Activated T-helper 1 cell treated with anti-CD3 and anti-CD28 coated beads, Interleukin-12 subunit alpha, Interleukin-12 subunit beta, Interleukin-2, Interleukin-4 antibody, amounts not matched to agents 30 ng/mL and 10 ng/mL and 1 ng/mL, durations not matched to agents 14 hours and 24 hours and 36 hours (primary cell): ENCODE measurements at regions of chr20 and their contacts with region 1.

Region 1: DNA sequence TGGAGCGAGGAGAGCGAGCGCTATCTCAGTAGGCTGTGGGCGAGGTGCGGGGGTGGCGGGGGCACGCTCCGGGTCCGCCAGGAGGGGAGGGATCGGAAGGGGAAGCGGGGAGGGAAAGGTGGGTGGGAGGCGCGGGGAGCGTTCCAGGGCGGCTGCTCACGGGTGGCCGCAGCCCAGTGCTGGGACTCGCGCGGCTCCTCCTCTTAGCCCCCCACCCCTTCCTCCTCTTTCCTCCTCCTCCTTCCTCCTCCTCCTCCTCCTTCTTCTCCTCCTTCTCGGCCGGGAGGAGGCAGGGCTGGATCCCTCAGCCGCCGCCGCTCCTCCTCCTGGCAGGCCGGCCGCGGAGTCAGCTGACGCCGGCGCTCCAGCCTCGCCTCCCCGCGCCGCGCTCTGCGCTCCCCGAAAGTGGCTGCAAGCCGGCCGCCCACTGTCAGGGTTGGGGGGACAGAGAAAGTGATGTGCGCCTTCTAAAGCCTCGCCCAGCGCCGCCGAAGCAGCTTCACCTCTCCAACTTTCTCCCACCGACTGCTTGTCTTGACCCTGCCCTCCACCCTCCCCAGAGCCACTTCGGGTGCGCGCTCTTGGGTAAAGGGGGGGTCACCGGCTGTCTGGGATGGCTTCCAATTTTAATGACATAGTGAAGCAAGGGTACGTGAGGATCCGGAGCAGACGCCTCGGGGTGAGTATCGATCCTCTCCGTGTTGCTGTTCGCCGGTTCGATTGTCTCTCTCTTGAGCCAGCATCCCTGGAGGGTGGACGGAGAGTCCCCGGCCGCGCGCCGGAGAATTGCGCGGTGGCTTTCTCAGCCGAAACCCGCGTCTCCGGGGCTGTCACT is at the start of gene DOK5:
- DNase-seq: no peak
- H3K4me3 Mint-ChIP-seq: peak within 1 kb of the TSS; percentile 83
- H3K27ac Mint-ChIP-seq: peak within 1 kb of the TSS; percentile 46
- H3K4me1 Mint-ChIP-seq: peaks cover 19% of the 10 kb centered on the region
- H3K27me3 Mint-ChIP-seq: peaks cover 23% of the 10 kb centered on the region
- total RNA-seq, gene DOK5: 25.2 and 27.7 TPM in 2 replicates

Region 2: GRCh38 chr20:52577696-52578095 is 1897.9 kb before region 1 on chr20:
- intact Hi-C with region 1: no loop called
- DNase-seq: no peak
- H3K4me3 Mint-ChIP-seq: no peak overlapping the region
- H3K27ac Mint-ChIP-seq: no peak overlapping the region
- H3K4me1 Mint-ChIP-seq: no peaks in the 10 kb centered on the region
- H3K27me3 Mint-ChIP-seq: no peaks in the 10 kb centered on the region

Region 3: DNA sequence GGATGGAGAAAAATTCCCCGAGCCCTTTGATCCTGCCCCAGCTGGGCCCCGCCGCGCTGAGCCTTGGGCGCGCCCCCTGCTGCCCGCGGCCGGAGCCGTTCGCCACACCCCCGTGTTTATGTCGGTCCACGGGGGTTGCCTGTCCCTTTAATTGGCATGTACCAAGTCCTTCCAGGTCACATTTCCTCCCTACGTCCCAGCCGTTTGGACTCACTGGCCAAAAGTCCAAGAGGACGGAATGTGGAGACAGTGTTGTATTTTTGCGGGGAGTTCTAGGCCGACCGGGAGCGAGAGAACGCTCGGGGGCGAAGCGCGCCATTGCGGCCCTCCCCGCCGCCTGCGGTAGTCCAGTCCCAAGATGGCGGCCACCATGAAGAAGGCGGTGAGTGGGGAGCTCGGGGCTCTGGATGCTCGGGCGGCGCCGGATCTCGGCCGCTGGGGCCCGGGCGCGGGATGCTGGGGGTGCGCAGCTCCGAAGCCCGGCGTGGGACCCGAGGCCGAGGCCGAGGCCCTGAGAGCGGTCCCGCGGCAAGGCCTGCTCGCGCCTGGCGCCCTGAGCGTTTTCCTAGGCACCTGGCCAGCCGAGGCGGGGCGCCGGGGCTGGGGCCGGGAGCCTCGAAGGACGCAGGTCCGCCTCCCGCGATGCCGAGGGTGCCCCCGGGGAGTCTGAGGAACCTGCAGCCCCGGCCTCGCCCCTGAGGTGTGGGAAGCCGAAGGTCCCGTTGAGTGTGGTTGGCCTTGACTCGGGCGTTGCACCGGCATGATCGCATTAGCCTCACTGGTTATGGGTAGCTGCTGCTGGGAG is 267.6 kb before region 1 on chr20 and contains the start of gene PFDN4:
- intact Hi-C with region 1: loop called (anchors 5 kb)
- DNase-seq: peak; percentile 79
- H3K4me3 Mint-ChIP-seq: peak within 1 kb of the TSS; percentile 96
- H3K27ac Mint-ChIP-seq: peak within 1 kb of the TSS; percentile 99
- H3K4me1 Mint-ChIP-seq: peaks cover 31% of the 10 kb centered on the region
- H3K27me3 Mint-ChIP-seq: no peaks in the 10 kb centered on the region
- total RNA-seq, gene PFDN4: 72.6 and 75.8 TPM in 2 replicates

Region 4: DNA sequence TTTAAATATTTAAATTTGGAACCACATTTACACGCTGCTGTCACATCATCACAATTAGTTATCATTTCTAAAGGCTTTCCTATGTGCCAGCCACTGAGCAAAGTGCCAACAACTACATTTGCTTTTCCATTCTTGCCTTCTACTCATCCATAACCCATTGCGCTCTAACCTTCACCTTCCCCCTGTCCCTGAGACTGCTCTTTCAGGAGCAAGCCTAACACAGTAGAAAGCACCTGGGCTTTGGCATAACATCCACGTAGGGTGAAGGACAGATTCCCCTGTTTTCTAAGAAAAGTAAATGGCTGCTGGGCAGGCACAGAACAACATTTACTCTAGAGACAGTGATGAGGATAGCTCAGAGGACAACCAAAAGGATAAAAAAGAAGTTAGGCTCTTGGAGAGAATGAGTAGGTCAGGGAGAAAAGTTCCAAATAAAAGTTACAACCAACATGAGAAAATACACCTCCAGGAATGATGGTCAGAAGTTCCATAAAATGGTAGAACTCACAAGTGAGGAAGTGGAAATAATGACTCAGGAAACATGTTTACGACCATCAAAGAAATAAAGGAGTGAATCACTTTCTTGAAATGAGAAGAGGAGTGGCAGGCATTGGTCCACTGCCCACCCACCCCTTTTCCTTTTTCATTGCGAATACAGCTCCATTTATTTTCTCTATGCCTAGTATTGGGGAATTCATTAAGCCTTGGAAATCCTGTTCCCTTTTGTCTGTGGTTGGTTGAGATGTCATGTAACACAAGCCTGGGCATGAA is 190.4 kb before region 1 on chr20:
- intact Hi-C with region 1: loop called (anchors 10 kb)
- DNase-seq: no peak
- H3K4me3 Mint-ChIP-seq: peak overlapping the region; percentile 79
- H3K27ac Mint-ChIP-seq: peak overlapping the region; percentile 96
- H3K4me1 Mint-ChIP-seq: peaks cover 28% of the 10 kb centered on the region
- H3K27me3 Mint-ChIP-seq: no peaks in the 10 kb centered on the region

Region 5: GRCh38 chr20:54350415-54350814 is 125.1 kb before region 1 on chr20:
- intact Hi-C with region 1: loop called (anchors 2 kb)
- DNase-seq: no peak
- H3K4me3 Mint-ChIP-seq: no peak overlapping the region
- H3K27ac Mint-ChIP-seq: peak overlapping the region; percentile 25
- H3K4me1 Mint-ChIP-seq: peaks cover 43% of the 10 kb centered on the region
- H3K27me3 Mint-ChIP-seq: no peaks in the 10 kb centered on the region

Region 6: GRCh38 chr20:54649511-54649962 is 174.0 kb after region 1 on chr20:
- intact Hi-C with region 1: loop called (anchors 10 kb)
- DNase-seq: peak; percentile 26
- H3K4me3 Mint-ChIP-seq: no peak overlapping the region
- H3K27ac Mint-ChIP-seq: no peak overlapping the region
- H3K4me1 Mint-ChIP-seq: no peaks in the 10 kb centered on the region
- H3K27me3 Mint-ChIP-seq: peaks cover 6% of the 10 kb centered on the region